ENCODE measurements at regions of chr1 and their contacts with region 1.

Region 1: DNA sequence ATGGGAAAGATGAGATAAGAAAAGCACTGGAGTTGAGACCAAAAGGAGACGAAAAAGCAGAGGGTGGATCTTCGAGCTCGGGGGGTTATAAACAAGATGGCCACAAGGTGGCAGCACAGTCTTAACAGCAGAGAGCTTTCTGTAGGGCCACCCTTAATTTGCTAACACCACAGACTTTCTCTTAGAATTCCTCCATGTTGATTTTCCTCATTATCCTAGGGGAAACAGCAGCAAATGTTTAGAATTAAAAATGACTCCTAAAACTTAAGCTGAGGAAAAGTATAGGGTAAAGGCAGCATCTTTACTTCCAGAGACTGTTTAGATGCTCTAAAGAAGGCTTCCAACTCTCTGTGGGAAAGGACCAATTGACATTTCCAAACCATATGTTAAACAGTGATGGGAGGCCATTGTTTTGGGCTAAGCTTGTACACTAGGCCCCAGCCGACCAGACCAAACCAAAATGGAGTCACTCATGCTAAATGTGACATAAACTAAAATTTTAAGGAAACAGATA is 2.5 kb upstream of the APOBEC4 start:
- DNase-seq: peak; percentile 86
- H3K4me3 Mint-ChIP-seq: no peak overlapping the region
- H3K27ac Mint-ChIP-seq: no peak overlapping the region
- H3K4me1 Mint-ChIP-seq: peaks cover 5% of the 10 kb centered on the region
- H3K27me3 Mint-ChIP-seq: peaks cover 5% of the 10 kb centered on the region
- CTCF ChIP-seq: peak; percentile 79

Region 2: DNA sequence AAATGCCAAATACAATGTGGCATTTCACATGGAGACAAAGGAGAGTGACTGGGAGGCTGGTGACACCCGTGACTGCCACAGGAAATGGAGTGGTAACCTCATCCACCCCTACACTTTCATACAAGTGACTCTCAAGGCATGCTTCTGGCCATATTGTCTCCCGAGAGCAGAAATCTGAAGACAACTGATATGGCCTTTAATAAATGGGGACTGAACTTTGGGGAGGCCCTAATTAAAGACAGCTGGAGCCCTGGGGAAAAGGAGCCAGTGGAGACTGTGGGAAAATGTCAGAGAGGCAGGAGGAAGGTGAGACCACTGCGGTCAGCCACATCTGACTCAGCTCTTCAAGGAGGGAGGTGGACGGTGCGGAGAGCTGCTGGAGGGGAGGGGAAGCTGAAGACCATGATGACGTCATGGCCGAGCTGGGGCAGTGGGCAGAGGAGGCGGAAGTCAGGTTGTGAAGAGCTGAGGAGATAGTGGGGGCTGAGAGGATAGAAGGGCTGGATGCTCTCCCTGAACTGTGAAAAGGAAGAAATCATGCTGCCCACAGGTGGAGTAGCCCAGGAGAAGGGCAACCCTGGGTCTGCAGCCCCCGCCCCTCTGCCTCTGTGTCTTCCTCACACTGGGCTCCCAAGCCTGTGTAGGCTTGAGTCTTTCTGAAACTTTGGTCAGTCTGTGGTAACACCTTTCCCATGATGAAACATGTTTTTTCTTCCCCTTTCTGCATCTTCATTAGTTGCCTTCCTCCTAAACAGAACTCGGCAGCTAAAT is 51.4 kb before region 1 on chr1:
- CTCF ChIA-PET with region 1: no interaction called
- intact Hi-C with region 1: no loop called
- DNase-seq: no peak
- H3K4me3 Mint-ChIP-seq: no peak overlapping the region
- H3K27ac Mint-ChIP-seq: no peak overlapping the region
- H3K4me1 Mint-ChIP-seq: peaks cover 15% of the 10 kb centered on the region
- H3K27me3 Mint-ChIP-seq: peaks cover 16% of the 10 kb centered on the region
- CTCF ChIP-seq: no peak

Region 3: DNA sequence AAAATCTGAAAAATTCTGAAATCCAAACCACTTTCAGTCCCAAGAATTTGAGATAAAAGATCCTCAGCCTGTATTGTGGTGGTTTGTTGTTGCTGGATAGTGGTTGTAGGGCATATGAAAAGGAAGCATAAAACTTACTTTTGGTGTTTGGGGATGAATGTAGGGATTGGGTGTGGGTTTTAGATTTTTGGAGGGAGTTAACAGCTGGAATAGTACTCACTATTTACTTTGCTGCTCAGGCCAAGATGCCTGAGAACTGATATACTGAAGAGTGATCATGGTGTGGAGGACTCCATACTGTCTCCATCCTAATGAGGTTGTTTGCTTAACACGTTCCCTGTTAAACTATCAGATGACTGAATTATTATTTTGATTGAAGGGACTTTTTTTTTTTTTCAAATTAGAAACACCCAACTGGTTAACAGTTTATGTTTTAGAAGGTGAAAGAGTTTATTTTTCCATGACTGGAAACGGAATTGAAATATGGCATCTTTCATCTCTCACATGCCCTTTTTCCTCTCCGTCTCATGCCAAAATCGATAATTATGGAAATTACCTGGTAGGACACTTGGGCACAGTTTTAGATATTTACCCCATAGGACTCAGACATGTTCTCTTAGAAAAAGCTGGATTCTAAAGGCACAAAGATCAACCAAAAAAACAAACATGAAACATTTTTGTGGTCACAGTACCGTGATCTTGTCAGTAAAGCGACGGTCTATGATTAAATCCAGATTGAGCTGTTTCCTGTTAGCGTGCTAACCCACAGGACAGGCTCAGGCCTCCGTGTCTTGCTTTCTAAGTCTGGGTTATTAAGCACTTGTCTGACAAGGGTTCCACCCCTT is 186.6 kb after region 1 on chr1:
- CTCF ChIA-PET with region 1: interaction called, 4 read pairs
- intact Hi-C with region 1: loop called (anchors 5 kb)
- DNase-seq: peak; percentile 44
- H3K4me3 Mint-ChIP-seq: peak overlapping the region; percentile 38
- H3K27ac Mint-ChIP-seq: peak overlapping the region; percentile 58
- H3K4me1 Mint-ChIP-seq: peaks cover 52% of the 10 kb centered on the region
- H3K27me3 Mint-ChIP-seq: no peaks in the 10 kb centered on the region
- CTCF ChIP-seq: no peak

Region 4: DNA sequence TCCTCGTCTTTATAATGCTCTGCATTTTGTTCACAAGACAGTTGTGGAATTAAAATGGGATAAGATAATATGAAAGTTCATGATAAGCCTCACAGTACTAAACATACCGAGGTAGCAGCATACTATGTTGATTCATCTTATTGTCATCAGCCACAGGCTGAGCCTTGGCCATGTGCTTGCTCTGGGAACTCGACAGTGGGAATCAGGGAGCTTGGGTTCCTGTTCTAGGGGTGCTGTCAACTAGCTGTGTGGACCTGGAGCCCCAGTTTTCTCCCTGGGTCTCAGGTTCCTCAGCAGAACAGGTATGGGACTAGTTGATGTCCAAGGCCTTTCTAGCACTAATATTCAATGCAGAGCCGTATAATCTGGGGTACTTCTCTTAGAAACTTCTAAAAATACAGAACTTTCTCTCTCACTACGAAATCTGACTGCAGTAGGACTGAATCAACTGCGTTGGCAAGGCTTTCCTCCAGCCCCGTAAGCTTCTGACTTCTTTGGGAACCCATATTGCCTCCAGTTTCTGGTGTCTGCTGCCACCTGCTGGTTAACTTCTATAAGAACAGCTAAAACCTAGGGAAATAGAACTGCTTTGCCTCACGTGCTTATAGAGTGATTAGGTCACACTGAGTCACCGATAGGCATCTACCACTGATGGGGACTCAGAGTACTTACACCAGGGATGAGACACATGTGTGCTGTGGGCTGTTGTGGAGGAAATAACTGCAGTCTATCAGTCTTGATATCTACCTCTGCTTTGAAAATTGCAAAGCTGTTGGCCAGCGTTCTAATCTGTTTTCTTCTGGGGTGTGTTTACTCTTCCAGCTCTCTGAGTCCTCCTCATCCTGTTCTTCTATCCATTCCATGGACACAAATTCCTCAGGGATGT is 260.2 kb after region 1 on chr1:
- CTCF ChIA-PET with region 1: interaction called, 67 read pairs
- intact Hi-C with region 1: loop called (anchors 1 kb)
- DNase-seq: peak; percentile 87
- H3K4me3 Mint-ChIP-seq: no peak overlapping the region
- H3K27ac Mint-ChIP-seq: peak overlapping the region; percentile 3
- H3K4me1 Mint-ChIP-seq: peaks cover 24% of the 10 kb centered on the region
- H3K27me3 Mint-ChIP-seq: no peaks in the 10 kb centered on the region
- CTCF ChIP-seq: peak; percentile 81

Region 5: GRCh38 chr1:184051485-184052193 is 396.0 kb after region 1 on chr1 and contains the start of gene TSEN15:
- CTCF ChIA-PET with region 1: no interaction called
- intact Hi-C with region 1: loop called (anchors 5 kb)
- DNase-seq: peak; percentile 87
- H3K4me3 Mint-ChIP-seq: peak within 1 kb of the TSS; percentile 90
- H3K27ac Mint-ChIP-seq: peak within 1 kb of the TSS; percentile 100
- H3K4me1 Mint-ChIP-seq: peaks cover 35% of the 10 kb centered on the region
- H3K27me3 Mint-ChIP-seq: no peaks in the 10 kb centered on the region
- CTCF ChIP-seq: no peak
- total RNA-seq, gene TSEN15: 51.7 and 62.6 TPM in 2 replicates

Region 6: DNA sequence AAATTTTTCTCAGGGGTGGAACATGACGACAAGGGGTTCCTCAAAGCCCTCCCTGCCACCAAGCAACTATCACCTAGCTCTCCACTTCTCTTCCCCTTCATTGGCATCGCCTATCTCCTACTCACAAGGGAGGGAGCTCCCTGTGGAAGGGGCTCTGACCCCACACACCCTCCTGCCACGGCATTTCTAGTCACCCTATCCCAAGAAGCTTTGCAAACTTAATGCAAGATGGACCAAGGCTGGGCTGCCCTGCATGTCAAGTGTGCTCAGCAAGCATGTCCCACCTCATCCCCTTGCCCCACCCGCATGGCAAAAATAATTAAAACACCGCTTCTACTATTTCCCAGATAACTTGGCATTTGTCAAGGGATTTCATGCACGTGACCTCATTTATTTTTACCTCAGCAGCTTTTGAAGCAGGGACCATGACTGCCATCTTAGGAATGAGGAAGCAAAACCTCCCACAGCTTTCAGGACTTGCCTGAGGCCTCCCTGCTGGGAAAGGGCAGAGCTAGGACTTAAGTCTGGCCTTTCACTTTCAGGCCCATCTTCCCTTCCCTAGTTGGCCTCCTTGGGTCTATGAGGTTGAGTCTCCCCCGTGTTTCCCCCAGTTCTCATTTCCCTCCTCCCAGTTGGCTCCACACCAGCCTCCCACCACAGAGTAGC is 557.2 kb after region 1 on chr1:
- CTCF ChIA-PET with region 1: no interaction called
- intact Hi-C with region 1: loop called (anchors 10 kb)
- DNase-seq: peak; percentile 80
- H3K4me3 Mint-ChIP-seq: no peak overlapping the region
- H3K27ac Mint-ChIP-seq: peak overlapping the region; percentile 88
- H3K4me1 Mint-ChIP-seq: peaks cover 26% of the 10 kb centered on the region
- H3K27me3 Mint-ChIP-seq: no peaks in the 10 kb centered on the region
- CTCF ChIP-seq: no peak